ENCODE measurements at regions of chr20 and their contacts with region 1.

Region 1: DNA sequence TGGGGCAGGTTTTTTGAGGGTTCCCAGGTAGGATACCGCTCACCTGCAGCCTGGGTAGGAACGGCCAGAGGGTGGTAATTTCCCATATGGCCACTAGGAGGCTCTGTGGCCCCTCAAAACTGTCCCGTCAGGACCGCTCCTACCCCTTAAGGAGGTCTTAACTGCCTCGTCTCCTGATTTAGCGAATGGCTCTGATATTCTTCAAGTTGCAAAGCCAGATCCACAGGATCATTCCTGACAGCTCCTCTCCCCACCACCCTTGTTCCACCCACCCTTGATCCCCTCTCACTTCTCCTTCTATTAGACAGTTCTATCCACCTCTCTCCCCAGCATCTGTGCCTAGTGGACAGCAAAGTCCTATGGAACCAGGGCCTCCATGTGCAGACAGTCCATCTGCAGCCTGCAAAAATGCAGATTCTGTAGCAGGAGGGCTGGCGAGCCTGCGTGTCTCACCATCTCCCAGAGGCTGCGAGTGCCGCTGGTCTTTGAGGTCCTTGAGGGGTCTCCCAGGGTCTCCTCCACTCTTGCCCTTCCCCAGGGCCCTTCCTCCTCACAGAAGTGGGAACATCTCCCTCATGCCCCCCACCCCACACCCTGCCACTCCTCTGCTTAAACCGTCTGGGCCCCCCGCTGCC is 34.3 kb upstream of the ZBP1 start:
- DNase-seq: peak; percentile 79
- ATAC-seq: peak; percentile 94
- H3K4me3 ChIP-seq: no peak overlapping the region
- H3K27ac ChIP-seq: no peak overlapping the region
- H3K4me1 ChIP-seq: no peaks in the 10 kb centered on the region
- H3K27me3 ChIP-seq: no peaks in the 10 kb centered on the region
- CTCF ChIP-seq: peak; percentile 98

Region 2: GRCh38 chr20:57630061-57630460 is 24.4 kb before region 1 on chr20:
- CTCF ChIA-PET with region 1: no interaction called
- POLR2A ChIA-PET with region 1: no interaction called
- intact Hi-C with region 1: no loop called
- DNase-seq: no peak
- ATAC-seq: no peak
- H3K4me3 ChIP-seq: no peak overlapping the region
- H3K27ac ChIP-seq: no peak overlapping the region
- H3K4me1 ChIP-seq: peaks cover 10% of the 10 kb centered on the region
- H3K27me3 ChIP-seq: no peaks in the 10 kb centered on the region
- CTCF ChIP-seq: no peak

Region 3: GRCh38 chr20:57686931-57687629 is 32.6 kb after region 1 on chr20:
- CTCF ChIA-PET with region 1: interaction called, 4 read pairs
- POLR2A ChIA-PET with region 1: no interaction called
- intact Hi-C with region 1: loop called (anchors 2 kb)
- DNase-seq: peak; percentile 90
- ATAC-seq: peak; percentile 84
- H3K4me3 ChIP-seq: no peak overlapping the region
- H3K27ac ChIP-seq: peak overlapping the region; percentile 17
- H3K4me1 ChIP-seq: peaks cover 52% of the 10 kb centered on the region
- H3K27me3 ChIP-seq: no peaks in the 10 kb centered on the region
- CTCF ChIP-seq: no peak

Region 4: DNA sequence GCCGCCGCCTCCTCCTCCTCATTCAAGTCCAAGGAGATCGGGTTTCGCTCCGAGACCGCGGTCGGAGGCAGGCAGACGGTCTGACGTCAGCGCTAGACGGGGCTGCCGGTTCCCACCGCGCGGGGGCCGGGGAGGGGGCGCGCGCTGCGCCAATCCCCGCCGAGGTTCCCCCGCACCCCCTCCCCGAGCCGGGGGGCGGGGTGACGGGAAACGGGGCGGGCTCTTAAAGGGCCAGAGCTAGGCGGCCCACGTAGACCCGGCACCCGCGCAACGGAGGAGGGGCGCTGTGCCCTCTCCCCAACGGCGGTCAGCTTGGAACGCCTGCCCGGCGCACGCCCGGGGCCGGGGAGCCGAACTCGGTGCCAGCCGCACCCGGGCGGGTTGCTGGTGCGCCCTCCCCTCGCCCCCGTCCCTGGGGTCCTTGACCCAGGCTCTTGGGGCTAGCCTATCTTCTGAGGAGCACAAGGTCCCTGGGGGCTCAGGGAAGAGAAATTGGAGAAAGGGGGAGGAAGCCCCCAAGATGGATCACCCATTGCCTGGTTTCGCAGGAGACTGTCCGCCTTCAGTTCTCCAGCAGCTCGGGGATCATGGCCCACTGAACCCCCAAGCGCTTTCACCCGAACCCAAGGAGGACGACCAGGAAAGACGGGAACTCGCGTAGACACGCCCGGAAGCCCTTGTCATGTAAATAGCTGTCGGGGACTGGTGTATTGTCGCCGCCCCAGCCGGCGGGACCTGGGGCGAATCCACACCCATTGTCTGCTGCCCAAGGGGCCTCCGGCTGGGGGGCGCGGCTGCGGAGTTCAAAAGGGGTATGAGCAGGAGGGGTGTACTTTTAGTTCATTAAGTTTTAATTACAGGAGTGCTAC is 55.7 kb after region 1 on chr20 and contains the start of gene PMEPA1:
- CTCF ChIA-PET with region 1: interaction called, 12 read pairs
- POLR2A ChIA-PET with region 1: interaction called, 3 read pairs
- intact Hi-C with region 1: no loop called
- DNase-seq: peak; percentile 99
- ATAC-seq: peak; percentile 66
- H3K4me3 ChIP-seq: peak within 1 kb of the TSS; percentile 98
- H3K27ac ChIP-seq: peak within 1 kb of the TSS; percentile 88
- H3K4me1 ChIP-seq: peaks cover 70% of the 10 kb centered on the region
- H3K27me3 ChIP-seq: no peaks in the 10 kb centered on the region
- CTCF ChIP-seq: peak; percentile 40; the same call in 1 of the 2 replicates
- total RNA-seq, gene PMEPA1: 21.9 and 29.3 TPM in 2 replicates

Region 5: GRCh38 chr20:58131551-58132142 is 477.2 kb after region 1 on chr20:
- CTCF ChIA-PET with region 1: no interaction called
- POLR2A ChIA-PET with region 1: no interaction called
- intact Hi-C with region 1: no loop called
- DNase-seq: peak; percentile 98
- ATAC-seq: peak; percentile 49
- H3K4me3 ChIP-seq: peak overlapping the region; percentile 43
- H3K27ac ChIP-seq: peak overlapping the region; percentile 74
- H3K4me1 ChIP-seq: peaks cover 65% of the 10 kb centered on the region
- H3K27me3 ChIP-seq: no peaks in the 10 kb centered on the region
- CTCF ChIP-seq: no peak

Region 6: DNA sequence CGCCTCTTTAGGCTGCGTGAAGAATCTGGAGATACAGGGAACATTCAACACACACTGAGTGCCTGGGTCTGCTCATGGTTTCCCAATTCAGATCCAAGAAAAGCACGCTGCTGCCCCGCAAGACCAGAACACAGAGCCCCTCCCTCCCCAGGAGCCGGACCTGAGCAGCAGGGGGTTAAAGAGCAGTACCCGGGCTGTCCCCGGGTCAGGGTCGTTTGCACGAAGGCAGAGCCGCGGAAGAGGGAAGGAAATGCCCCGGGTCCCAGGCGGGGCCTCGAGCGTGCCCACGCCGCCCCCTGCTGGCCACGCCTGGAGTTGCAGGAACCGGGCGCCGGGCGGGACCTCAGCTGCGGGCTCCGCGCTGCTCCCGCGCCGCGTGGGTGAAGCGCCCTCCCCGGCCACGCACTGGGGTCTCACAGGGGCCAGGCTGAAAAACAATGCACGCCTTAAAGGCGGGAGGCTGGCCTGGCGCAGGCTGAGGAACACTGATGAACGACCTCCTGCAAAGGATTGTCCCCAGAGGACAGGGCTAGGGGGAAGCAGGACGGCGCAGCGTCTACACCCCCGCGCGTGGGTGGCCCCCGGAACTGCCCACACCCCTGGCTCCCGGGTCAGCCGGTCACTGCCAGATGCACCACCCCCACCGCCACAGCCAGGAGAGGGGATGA is 525.1 kb after region 1 on chr20:
- CTCF ChIA-PET with region 1: interaction called, 3 read pairs
- POLR2A ChIA-PET with region 1: no interaction called
- intact Hi-C with region 1: loop called (anchors 1 kb)
- DNase-seq: peak; percentile 77
- ATAC-seq: peak; percentile 93
- H3K4me3 ChIP-seq: peak overlapping the region; percentile 66
- H3K27ac ChIP-seq: peak overlapping the region; percentile 4; the same call in 1 of the 2 replicates
- H3K4me1 ChIP-seq: peaks cover 12% of the 10 kb centered on the region
- H3K27me3 ChIP-seq: no peaks in the 10 kb centered on the region
- CTCF ChIP-seq: peak; percentile 99

Region 7: DNA sequence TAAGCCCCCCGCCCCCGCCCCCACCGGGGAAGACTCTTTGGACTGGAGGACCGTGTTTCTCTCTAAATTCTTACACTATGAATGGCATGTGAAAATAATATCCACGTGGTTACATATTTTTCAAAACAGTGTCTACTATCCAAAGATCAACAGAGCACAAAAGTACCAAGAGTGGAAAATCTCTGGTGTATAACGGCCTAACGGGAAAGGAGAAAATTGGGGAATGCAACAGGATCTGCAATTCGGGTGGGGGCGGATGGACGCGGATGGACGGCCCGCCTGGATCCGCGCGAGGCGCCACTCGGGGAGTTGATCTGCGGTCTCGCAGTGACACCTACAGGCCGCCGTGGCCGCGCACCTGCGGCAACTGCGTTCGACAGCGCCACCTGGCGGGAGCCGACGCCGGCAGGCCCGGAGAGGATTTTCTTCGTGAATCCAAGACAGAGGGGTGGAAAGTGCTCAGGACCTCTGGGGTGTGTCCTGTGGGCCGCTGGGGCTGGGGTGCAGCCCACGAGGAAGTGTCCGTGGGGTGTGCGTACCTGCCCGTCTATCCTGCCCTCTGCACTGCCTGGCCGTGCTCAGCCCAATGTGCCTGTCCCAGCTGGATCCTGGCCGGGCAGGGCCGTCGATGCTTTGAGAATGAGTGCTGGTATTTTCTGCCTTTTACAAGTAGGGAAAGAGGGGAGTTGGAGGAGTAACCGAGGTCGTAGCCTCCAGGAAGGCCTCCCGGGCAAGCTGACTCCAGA is 555.3 kb after region 1 on chr20:
- CTCF ChIA-PET with region 1: no interaction called
- POLR2A ChIA-PET with region 1: no interaction called
- intact Hi-C with region 1: loop called (anchors 1 kb)
- DNase-seq: peak; percentile 94
- ATAC-seq: peak; percentile 89
- H3K4me3 ChIP-seq: peak overlapping the region; percentile 54
- H3K27ac ChIP-seq: no peak overlapping the region
- H3K4me1 ChIP-seq: peaks cover 6% of the 10 kb centered on the region; the same call in 1 of the 2 replicates
- H3K27me3 ChIP-seq: no peaks in the 10 kb centered on the region
- CTCF ChIP-seq: peak; percentile 100